ENCODE measurements at regions of chr7 and their contacts with region 1.

Region 1: DNA sequence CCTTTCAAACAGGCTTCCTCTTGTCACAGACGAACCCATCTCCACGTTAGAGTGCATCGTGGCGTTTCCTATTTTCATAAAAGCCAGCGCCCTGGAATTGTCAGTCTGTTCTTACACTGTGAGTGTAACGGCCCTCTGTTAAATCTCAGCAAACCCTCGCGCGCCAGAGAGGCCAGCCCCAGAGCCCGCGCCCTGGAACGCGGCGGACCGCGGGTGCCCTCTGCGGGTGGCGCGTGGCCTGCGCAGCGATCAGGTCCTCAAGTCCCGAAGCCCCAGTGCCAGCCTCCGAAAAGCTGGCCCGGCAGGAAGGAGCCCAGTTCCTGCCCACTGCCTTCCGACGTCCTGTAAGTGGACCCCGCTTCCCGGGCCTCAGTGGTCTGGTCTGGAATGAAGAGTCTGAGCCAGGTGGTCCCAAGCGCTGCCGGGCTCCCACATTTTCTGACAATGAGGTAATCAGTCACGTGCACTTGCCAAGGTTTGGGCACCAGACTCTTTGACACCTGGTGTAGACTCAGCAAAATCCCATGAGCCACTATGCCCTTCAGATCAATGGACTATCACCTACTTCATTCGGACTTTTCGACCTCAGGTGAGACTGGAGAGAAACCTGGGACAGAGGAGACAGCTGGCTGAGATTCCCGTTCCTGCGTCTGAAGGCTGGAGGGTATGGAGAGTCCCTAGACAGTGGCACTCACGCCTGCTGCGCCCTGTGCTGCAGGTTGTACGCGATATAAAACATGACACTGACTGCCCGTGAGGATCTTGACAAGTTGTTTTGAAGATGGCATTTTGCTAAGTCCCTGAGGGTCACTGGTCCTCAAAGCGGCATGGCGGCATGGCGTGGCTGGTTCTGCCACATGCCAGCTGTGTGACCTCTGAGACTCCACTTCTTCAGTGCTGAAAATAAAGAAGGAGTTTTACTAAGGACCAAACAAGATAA is 109.4 kb upstream of the LANCL2 start:
- DNase-seq: peak; percentile 61
- ATAC-seq: peak; percentile 91
- H3K4me3 ChIP-seq: peak overlapping the region; percentile 47 to 76 (median 48)
- H3K27ac ChIP-seq: no peak overlapping the region
- H3K4me1 ChIP-seq: peaks cover 17% of the 10 kb centered on the region
- H3K27me3 ChIP-seq: peaks cover 0 to 23% of the 10 kb centered on the region in 2 experiments; a peak in 3 of 5 replicates
- CTCF ChIP-seq: peak; percentile 97
- EP300 ChIP-seq: no peak
- POLR2A ChIP-seq: no peak
- RAD21 ChIP-seq: peak; percentile 96

Region 2: DNA sequence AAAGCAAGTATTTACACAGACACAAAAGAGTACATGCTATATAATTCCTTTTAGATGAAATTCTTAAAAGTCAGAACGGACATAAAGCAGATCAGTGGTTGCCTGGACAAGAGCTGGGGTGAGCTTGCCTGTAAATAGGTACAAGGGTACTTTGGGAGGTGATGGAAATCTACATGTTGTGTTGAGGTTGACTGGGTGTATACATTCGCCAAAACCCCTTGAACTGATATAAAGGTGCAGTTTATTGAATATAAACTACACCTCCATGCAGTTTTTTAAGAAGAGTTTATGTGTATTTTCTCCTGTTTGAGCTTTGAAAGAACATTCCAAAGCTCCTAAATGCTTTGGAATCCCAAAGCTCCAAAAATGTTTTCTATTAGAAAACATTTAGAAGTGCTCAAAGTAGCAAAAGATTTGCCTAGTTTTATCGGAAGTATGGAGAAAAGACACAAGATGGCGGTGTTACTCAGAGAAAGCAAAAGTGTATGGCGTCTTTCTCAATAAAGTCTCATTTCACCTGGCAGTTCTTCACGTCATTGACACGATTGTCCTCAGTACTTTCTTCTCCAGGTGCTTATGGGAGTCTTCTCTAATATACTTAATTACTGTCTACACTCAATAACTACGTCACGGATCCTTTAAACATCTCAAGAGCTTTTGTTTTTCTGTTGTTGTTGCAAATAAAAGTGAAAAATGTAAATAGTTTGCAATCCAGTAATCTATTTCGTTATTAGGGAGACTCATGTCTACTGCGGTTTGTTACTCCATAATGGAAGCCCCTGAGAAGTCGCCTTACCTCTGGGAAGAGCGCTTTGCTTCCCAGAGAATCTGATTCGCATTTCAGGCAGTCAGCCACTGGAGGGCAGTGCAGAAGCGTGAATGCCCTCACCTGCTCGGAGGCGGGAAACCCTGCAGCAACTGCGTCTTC is 482.0 kb before region 1 on chr7:
- CTCF ChIA-PET with region 1: interaction called, 98 read pairs
- POLR2A ChIA-PET with region 1: no interaction called
- in situ Hi-C with region 1: loop called (anchors 5 kb)
- intact Hi-C with region 1: loop called (anchors 1 kb)
- DNase-seq: peak; percentile 73
- ATAC-seq: peak; percentile 96
- H3K4me3 ChIP-seq: peak overlapping the region in 1 of 3 experiments; percentile 19; a peak in 3 of 6 replicates
- H3K27ac ChIP-seq: no peak overlapping the region
- H3K4me1 ChIP-seq: peaks cover 4% of the 10 kb centered on the region; the same call in 1 of the 2 replicates
- H3K27me3 ChIP-seq: peaks cover 4 to 22% of the 10 kb centered on the region in 2 experiments; a peak in 2 of 5 replicates
- CTCF ChIP-seq: peak; percentile 92
- EP300 ChIP-seq: no peak
- POLR2A ChIP-seq: no peak
- RAD21 ChIP-seq: peak; percentile 84

Region 3: GRCh38 chr7:54788664-54789063 is 467.1 kb before region 1 on chr7:
- CTCF ChIA-PET with region 1: interaction called, 15 read pairs
- POLR2A ChIA-PET with region 1: interaction called, 4 read pairs
- in situ Hi-C with region 1: no loop called
- intact Hi-C with region 1: loop called (anchors 1 kb)
- DNase-seq: peak; percentile 53
- ATAC-seq: peak; percentile 85
- H3K4me3 ChIP-seq: no peak overlapping the region
- H3K27ac ChIP-seq: no peak overlapping the region
- H3K4me1 ChIP-seq: no peaks in the 10 kb centered on the region
- H3K27me3 ChIP-seq: peaks cover 0 to 4% of the 10 kb centered on the region in 2 experiments; a peak in 1 of 5 replicates
- CTCF ChIP-seq: peak; percentile 80
- EP300 ChIP-seq: no peak
- POLR2A ChIP-seq: no peak
- RAD21 ChIP-seq: peak; percentile 46; the same call in 1 of the 2 replicates

Region 4: GRCh38 chr7:55078465-55079372 is 177.0 kb before region 1 on chr7:
- CTCF ChIA-PET with region 1: no interaction called
- POLR2A ChIA-PET with region 1: interaction called, 3 read pairs
- in situ Hi-C with region 1: no loop called
- intact Hi-C with region 1: loop called (anchors 5 kb)
- DNase-seq: peak; percentile 77
- ATAC-seq: peak; percentile 91
- H3K4me3 ChIP-seq: peak overlapping the region; percentile 53 to 77 (median 56)
- H3K27ac ChIP-seq: peak overlapping the region; percentile 94
- H3K4me1 ChIP-seq: peaks cover 89% of the 10 kb centered on the region
- H3K27me3 ChIP-seq: no peaks in the 10 kb centered on the region
- CTCF ChIP-seq: peak; percentile 74
- EP300 ChIP-seq: peak in 1 of 2 experiments; percentile 47; a peak in 2 of 4 replicates
- POLR2A ChIP-seq: peak; percentile 27 to 48; a peak in 2 of 4 replicates
- RAD21 ChIP-seq: no peak

Region 5: DNA sequence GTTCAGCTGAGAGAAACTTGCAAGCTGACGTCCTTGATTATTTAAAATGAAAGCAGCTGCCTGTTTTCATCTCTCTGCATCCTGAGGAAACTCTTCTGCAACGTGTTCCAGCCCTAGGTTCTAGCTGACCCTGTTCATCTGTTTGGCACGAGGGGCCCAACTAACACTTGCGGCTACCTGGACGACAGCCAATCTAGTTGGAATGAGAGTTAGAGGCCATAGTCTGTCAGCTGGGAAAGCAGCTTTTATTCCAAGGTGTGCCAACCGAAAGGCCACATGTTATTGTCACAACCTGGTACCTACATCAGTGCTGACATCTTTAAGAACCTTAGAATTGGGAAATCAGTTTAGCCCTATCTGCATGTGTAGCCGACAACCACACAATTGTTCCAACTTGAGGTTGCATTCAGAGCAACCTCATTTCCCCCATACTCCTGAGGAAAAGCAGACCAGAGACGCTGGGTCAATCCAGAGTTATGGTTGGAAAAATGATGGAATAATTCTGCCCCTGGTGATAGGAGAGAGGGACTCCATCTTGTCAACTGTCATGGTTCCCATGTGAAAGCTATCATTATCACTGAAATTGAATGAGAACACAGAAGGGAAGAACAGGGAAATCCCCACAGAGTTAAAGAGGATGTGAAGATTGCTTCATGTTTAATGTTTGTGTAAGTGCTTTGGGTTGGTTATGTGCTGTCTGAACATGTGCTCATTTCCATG is 115.4 kb before region 1 on chr7:
- CTCF ChIA-PET with region 1: interaction called, 4 read pairs
- POLR2A ChIA-PET with region 1: no interaction called
- in situ Hi-C with region 1: loop called (anchors 10 kb)
- intact Hi-C with region 1: loop called (anchors 2 kb)
- DNase-seq: no peak
- ATAC-seq: peak; percentile 39; the same call in 2 of the 3 replicates
- H3K4me3 ChIP-seq: no peak overlapping the region
- H3K27ac ChIP-seq: no peak overlapping the region
- H3K4me1 ChIP-seq: peaks cover 36% of the 10 kb centered on the region
- H3K27me3 ChIP-seq: no peaks in the 10 kb centered on the region
- CTCF ChIP-seq: no peak
- EP300 ChIP-seq: no peak
- POLR2A ChIP-seq: no peak
- RAD21 ChIP-seq: no peak

Region 6: DNA sequence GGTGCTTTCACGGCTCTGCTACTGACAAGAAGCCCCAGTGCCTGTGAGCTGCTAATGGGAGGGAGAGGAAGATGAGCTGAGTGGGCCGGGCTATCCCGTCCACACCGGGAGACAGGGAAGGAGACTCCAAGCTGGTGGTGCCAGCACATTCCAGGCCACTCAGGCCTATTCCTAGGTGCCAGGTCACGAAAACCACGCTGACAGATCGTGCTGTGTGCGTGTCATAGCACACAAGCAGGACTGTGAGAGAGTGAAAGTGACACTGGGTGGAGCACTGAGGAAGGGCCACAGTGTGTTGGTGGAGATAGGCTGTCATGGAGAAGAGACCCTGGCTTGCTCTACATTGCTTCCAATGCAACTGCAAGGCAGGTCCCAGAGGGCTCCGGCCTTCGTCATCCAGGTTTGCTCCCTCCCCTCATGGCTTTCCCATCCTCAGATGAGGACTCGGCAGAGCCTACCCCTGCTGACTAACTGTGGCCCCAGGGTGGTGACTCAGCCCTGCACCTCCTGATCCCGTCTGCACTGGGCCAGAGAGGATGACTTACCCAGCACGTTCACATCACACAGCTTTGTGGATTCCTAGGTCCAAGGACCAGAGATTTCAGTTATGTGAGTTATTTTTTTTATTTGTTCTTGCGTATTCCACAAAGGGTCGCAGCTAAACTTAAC is 69.7 kb before region 1 on chr7:
- CTCF ChIA-PET with region 1: no interaction called
- POLR2A ChIA-PET with region 1: interaction called, 16 read pairs
- in situ Hi-C with region 1: no loop called
- intact Hi-C with region 1: loop called (anchors 2 kb)
- DNase-seq: peak; percentile 78
- ATAC-seq: peak; percentile 75
- H3K4me3 ChIP-seq: peak overlapping the region in 1 of 3 experiments; percentile 70; a peak in 2 of 6 replicates
- H3K27ac ChIP-seq: peak overlapping the region; percentile 99
- H3K4me1 ChIP-seq: peaks cover 96% of the 10 kb centered on the region
- H3K27me3 ChIP-seq: no peaks in the 10 kb centered on the region
- CTCF ChIP-seq: no peak
- EP300 ChIP-seq: peak in 1 of 2 experiments; percentile 62; a peak in 2 of 4 replicates
- POLR2A ChIP-seq: no peak
- RAD21 ChIP-seq: peak; percentile 21; the same call in 1 of the 2 replicates